Vagina (tissue), 2 donors: ENCODE measurements at regions of chr10 and their contacts with region 1.

Region 1: GRCh38 chr10:96292971-96293920 is 11.0 kb upstream of the DNTT start:
- DNase-seq: peak in 1 of 2 donors; percentile 67
- H3K4me3 ChIP-seq: no peak overlapping the region
- H3K27ac ChIP-seq: no peak overlapping the region
- H3K4me1 ChIP-seq: peaks cover under 1% of the 10 kb centered on the region
- H3K27me3 ChIP-seq: no peaks in the 10 kb centered on the region
- CTCF ChIP-seq: peak in 1 of 3 experiments; percentile 14
- POLR2A ChIP-seq: no peak

Region 2: DNA sequence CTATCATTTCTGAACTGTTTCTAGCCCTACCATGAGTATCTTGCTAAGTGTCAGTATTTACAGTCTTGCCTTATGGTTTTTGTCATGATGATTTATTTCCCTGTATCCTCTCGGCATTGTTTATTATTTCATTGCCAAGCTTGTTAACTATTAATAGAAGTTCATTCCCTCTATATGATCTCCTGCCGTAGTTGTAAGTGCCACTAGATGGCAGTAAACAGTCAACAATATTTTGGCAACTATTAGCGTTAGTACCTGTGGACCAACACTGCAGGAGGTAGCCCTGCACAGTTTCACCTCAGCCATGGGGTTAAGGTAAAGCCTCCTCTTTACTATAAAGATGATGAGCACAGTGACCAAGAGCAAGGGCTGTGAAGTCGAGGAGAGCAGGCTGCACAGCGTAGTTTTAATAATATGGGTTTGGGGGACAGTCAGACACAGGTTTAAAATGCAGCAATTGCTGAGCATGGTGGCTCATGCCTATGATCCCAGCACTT is 276.0 kb before region 1 on chr10:
- intact Hi-C with region 1: loop called (anchors 10 kb)
- DNase-seq: no peak
- H3K4me3 ChIP-seq: no peak overlapping the region
- H3K27ac ChIP-seq: no peak overlapping the region
- H3K4me1 ChIP-seq: peaks cover 4% of the 10 kb centered on the region
- H3K27me3 ChIP-seq: no peaks in the 10 kb centered on the region
- CTCF ChIP-seq: peak in 2 of 3 experiments; percentile 35 to 66
- POLR2A ChIP-seq: no peak

Region 3: DNA sequence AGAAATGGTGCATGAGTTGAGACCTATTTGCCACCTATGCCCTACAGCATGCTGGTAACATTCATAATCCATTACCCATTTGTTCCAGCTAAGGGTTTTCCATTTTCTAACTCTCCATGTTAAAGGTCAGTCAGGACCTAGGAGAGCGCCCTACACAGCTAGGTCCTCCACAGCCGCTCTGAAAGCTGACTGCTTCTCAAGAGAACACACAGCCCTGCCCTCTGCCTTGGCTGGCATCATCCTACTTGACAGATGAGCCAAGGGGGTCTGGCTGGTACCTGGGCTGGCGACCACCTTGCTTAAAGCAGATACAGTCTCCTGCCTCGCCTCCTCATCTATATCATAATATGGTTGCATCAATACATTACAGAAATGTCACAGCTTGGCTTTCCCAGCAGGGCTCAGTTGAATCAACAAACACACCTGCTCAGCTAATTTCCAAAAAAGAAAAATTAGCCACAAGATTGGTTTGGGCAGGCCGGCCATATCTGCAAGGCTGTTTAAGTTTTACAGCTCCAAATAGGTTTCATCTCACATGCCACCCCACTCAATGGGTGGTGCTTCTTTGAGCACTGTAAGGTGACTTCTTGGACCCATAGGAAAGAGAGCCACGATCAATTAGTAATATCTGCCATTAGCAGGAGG is 203.2 kb after region 1 on chr10:
- intact Hi-C with region 1: no loop called
- DNase-seq: peak; percentile 28 to 40
- H3K4me3 ChIP-seq: no peak overlapping the region
- H3K27ac ChIP-seq: no peak overlapping the region
- H3K4me1 ChIP-seq: no peaks in the 10 kb centered on the region
- H3K27me3 ChIP-seq: no peaks in the 10 kb centered on the region
- CTCF ChIP-seq: no peak
- POLR2A ChIP-seq: no peak